ENCODE measurements at regions of chr2 and their contacts with region 1.

Region 1: DNA sequence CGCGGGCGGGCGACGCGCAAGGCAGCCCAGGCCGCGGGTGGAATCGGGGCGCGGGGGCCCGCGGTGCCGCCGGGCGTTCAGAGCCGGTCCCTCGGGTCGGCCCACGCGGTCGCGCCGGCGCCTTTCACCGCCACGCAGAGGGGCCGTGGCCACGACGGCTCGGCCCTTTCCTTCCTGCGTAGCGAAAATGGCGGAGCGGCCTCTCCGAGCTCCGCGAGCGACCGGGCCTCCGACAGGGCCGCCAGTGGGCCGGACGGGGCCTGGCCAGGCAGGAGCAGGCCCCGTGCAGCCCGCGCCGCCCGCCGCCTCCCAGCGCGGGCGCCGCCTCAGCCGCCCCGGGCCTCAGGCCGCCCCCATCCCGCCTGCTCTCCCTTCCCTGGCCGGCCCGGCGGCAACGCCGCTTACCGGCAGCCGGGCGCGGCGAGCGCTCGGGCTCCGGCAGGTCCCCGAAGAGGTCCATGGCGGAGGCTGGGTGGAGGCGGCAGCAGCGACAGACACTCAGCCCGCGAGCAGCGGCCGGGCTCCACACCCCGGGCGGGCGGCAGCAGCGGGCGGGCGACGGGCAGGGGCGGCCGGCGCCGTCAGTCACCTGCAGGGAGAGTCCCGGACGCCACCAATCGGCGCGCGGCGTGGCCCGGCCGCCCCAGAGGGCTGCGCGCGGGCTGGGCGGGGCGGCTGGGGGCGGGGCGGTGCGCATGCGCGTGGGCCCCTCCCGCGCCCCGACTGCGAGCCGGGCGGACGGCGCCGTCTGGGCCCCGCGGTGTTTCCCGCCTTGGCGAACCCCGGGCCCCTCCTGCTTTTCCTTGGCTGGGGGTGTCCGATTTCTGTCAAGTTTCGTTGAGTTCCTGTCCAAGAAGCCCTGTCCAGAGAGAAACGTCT is at the start of gene ILKAP:
- DNase-seq: peak; percentile 88
- H3K4me3 Mint-ChIP-seq: peak within 1 kb of the TSS; percentile 89
- H3K27ac Mint-ChIP-seq: peak within 1 kb of the TSS; percentile 89
- H3K4me1 Mint-ChIP-seq: peaks cover 45% of the 10 kb centered on the region
- H3K27me3 Mint-ChIP-seq: no peaks in the 10 kb centered on the region
- total RNA-seq, gene ILKAP: 77.3 and 79.9 TPM in 2 replicates

Region 2: DNA sequence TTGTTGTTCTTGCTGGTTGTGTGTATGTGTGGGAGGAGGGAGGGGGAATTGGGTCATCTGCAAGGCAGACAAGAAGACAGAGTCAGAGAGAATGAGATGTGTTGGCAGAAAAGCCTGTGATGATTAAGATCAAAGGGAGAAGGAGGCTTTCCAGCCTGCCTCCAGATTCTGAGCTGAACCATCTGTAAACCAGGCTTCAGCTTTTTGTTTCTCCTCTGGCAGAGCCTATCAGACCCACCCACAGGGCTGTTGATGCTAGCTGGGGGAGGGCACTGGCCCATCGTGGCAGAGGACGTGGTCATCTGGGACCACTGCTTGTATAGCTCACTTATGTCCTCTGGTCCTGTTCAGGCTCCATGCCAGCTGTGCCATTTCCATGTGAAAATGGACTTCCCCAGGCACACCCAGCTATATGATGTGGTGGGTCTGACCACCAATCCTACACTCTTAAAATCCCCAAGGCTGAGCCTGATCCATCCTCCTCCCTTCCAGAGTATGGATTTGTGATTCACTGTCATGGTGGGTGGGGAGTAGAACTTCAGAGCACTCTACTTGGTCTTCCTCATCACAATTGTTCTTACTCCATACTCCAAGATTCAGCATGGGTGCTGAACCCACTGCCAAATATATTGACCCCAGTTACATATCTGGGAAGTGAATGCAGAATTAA is 761.6 kb before region 1 on chr2:
- intact Hi-C with region 1: loop called (anchors 10 kb)
- DNase-seq: no peak
- H3K4me3 Mint-ChIP-seq: peak overlapping the region; percentile 41
- H3K27ac Mint-ChIP-seq: peak overlapping the region; percentile 86
- H3K4me1 Mint-ChIP-seq: peaks cover 58% of the 10 kb centered on the region
- H3K27me3 Mint-ChIP-seq: no peaks in the 10 kb centered on the region

Region 3: DNA sequence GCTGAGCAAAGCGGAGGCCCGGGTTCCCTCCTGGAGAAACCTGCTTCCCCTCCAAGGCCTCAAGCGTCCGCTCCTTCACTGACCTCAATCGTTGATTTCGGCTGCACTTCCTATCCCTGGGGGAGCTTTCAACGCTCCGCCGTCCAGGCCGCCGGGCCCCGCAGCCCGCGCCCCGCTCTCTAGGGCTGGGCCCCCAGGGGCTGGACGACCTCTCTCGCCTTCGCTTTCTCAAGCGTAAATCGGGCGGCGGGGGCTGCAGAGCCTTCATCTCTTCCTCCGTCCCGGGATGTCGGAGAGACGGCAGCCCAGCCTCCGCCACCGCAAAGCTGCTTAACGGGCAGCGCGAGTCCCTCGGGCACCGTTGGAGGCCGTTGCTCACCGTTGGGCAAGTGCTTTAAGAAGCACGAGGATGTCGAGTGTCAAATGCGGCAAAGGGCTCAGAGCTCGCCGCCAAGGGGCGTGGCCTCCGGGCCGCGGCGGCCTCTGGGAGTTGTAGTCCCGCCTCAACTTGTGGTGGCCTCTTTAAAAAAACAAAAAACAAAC is 28.0 kb after region 1 on chr2:
- intact Hi-C with region 1: loop called (anchors 1 kb)
- DNase-seq: peak; percentile 77
- H3K4me3 Mint-ChIP-seq: peak overlapping the region; percentile 85
- H3K27ac Mint-ChIP-seq: peak overlapping the region; percentile 56
- H3K4me1 Mint-ChIP-seq: peaks cover 20% of the 10 kb centered on the region
- H3K27me3 Mint-ChIP-seq: peaks cover 52% of the 10 kb centered on the region

Region 4: GRCh38 chr2:238239872-238240751 is 36.8 kb after region 1 on chr2 and contains the start of gene HES6:
- intact Hi-C with region 1: loop called (anchors 1 kb)
- DNase-seq: peak; percentile 79
- H3K4me3 Mint-ChIP-seq: peak within 1 kb of the TSS; percentile 88
- H3K27ac Mint-ChIP-seq: no peak within 1 kb of the TSS
- H3K4me1 Mint-ChIP-seq: no peaks in the 10 kb centered on the region
- H3K27me3 Mint-ChIP-seq: peaks cover 37% of the 10 kb centered on the region
- total RNA-seq, gene HES6: 10.3 and 11.2 TPM in 2 replicates